Panc1 (cell line): ENCODE measurements at regions of chr3 and their contacts with region 1.

Region 1: GRCh38 chr3:50184242-50184978 is 7.0 kb upstream of the GNAT1 start:
- DNase-seq: no peak
- ATAC-seq: no peak
- H3K4me3 ChIP-seq: no peak overlapping the region
- H3K27ac ChIP-seq: no peak overlapping the region
- H3K4me1 ChIP-seq: peaks cover 15% of the 10 kb centered on the region
- H3K27me3 ChIP-seq: no peaks in the 10 kb centered on the region
- CTCF ChIP-seq: no peak

Region 2: DNA sequence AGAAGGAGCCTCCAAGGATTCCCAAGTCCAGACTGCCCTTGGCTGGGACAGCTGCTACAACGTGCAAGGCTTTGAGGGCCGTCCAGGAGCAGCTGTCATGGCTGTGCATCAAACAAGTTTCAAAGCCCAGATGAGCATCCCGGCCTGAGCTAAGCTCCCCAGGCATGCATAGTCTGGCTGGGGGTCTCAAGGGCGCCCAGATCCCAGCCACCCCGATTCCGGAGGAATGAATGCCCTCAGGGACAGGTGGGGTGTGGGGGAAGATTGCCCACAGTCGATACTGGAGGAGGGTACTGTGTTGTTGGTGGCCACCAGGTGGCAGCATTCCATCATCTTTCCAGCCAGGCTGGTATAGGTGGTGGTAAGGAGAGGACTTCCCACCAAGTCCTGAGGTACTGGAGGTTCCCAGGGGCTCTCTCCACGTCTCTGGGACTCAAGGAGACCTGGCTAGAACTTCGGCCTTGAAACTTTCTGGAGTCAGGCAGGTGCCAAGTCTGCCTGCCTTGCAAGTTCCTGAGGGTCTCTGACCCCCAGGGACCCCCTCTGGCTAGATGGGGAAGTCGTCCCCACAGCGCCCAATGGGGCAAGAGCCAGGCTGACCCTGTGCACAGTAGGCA is 62.9 kb before region 1 on chr3:
- CTCF ChIA-PET with region 1: interaction called, 12 read pairs
- POLR2A ChIA-PET with region 1: no interaction called
- in situ Hi-C with region 1: no loop called
- intact Hi-C with region 1: loop called (anchors 1 kb)
- DNase-seq: peak; percentile 32
- ATAC-seq: peak; percentile 86
- H3K4me3 ChIP-seq: no peak overlapping the region
- H3K27ac ChIP-seq: peak overlapping the region; percentile 34; the same call in 1 of the 2 replicates
- H3K4me1 ChIP-seq: peaks cover 31% of the 10 kb centered on the region
- H3K27me3 ChIP-seq: no peaks in the 10 kb centered on the region
- CTCF ChIP-seq: peak; percentile 80